ENCODE measurements at regions of chr7 and their contacts with region 1.

Region 1: DNA sequence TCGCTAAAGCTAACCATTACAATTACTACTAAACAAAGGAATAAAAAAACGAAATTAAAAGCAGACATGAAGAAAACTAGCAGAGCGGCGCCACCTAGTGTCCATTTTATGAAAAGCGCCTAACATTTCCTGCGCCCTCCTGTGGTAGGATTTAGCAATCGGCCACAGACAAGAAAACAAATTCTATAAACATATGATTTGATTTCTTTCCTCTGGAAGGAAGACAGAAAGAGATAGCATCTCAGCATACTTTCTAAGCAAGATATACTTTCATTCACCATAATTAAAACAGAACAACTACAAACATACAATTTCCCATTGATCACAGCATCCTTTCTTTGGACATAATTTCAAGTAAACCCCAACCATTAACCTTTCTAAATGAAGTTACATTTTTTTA is 337.7 kb upstream of the NPVF start:
- DNase-seq: peak; percentile 54
- H3K4me3 ChIP-seq: peak overlapping the region in 1 of 2 experiments; percentile 28; a peak in 1 of 4 replicates
- H3K27ac ChIP-seq: no peak overlapping the region
- H3K4me1 ChIP-seq: peaks cover 0 to 19% of the 10 kb centered on the region in 2 experiments; a peak in 2 of 4 replicates
- H3K27me3 ChIP-seq: no peaks in the 10 kb centered on the region
- CTCF ChIP-seq: peak; percentile 100
- EP300 ChIP-seq: no peak; a peak in 1 of 4 replicates
- RAD21 ChIP-seq: peak; percentile 100

Region 2: DNA sequence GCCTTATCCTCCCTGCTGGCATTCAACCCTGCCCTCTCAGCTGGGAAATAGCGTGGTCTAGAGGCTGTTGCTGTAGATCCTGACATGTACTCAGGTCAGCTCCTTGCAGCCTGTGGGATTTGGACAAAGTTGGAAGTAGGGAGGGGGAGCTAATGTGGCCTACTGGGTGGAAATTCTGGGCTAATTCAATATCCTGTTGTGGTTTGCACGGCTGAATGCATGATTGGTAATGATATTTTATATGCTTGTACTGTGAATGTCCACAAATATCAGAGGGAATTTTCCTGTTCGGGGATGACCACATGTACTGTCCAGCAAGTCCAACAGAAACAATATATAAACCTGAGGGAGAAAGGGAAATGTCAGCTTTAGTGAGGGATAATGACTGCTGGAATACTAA is 315.6 kb before region 1 on chr7:
- CTCF ChIA-PET with region 1: interaction called, 261 read pairs
- POLR2A ChIA-PET with region 1: no interaction called
- DNase-seq: no peak
- H3K4me3 ChIP-seq: no peak overlapping the region
- H3K27ac ChIP-seq: no peak overlapping the region
- H3K4me1 ChIP-seq: no peaks in the 10 kb centered on the region; a peak in 1 of 4 replicates
- H3K27me3 ChIP-seq: no peaks in the 10 kb centered on the region
- CTCF ChIP-seq: no peak
- EP300 ChIP-seq: no peak
- RAD21 ChIP-seq: no peak

Region 3: DNA sequence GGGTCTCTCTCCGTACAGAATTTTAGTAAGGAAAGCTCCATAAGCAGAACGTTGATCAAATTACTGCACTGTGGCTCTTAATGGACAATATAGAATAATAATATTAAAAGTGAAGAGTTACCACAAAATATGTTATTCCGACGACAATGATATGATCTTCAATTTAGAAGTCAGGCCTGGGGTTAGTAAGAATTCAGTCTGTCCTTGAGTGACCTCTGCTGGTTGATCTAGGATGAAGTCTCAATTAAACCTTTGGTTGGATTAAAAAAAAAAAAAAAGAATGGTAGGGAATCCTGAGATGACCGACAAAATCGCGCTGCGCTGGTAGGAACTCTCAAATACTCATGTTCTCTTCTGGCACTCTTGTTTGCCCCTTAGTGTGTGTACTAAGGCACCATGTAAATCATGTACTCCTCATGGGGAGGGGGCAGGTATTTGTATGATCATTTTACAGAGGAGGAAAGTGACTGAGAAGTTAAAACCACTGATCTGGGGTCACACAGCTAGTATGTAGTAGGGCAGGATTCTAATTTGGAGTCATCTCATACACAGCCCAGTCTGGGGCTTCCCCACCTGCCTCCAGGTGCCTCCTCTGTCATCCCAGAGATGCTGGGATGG is 176.4 kb before region 1 on chr7:
- CTCF ChIA-PET with region 1: interaction called, 766 read pairs
- POLR2A ChIA-PET with region 1: interaction called, 3 read pairs
- DNase-seq: peak; percentile 68
- H3K4me3 ChIP-seq: no peak overlapping the region
- H3K27ac ChIP-seq: no peak overlapping the region
- H3K4me1 ChIP-seq: peaks cover 0 to 20% of the 10 kb centered on the region in 2 experiments; a peak in 2 of 4 replicates
- H3K27me3 ChIP-seq: no peaks in the 10 kb centered on the region
- CTCF ChIP-seq: peak; percentile 73
- EP300 ChIP-seq: no peak
- RAD21 ChIP-seq: peak; percentile 88

Region 4: DNA sequence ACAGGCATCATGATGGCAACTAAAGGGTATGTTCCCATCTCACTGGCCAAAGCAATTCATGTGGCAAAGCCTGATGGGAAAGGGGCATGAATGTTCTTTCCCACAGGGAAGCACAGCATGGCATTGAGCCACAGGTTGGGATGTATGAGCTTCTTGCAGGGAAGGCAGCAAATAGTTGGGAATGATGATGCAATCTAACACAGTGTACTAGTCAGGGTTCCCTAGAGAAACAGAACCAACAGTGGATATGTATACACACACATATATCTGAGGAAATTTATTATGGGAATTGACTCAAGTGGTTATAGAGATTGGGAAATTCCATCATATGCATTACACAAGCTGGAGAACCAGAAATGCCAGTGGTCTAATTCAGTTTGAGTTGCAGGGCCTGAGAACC is 84.1 kb before region 1 on chr7:
- CTCF ChIA-PET with region 1: interaction called, 15 read pairs
- POLR2A ChIA-PET with region 1: no interaction called
- DNase-seq: no peak
- H3K4me3 ChIP-seq: no peak overlapping the region
- H3K27ac ChIP-seq: no peak overlapping the region
- H3K4me1 ChIP-seq: no peaks in the 10 kb centered on the region
- H3K27me3 ChIP-seq: no peaks in the 10 kb centered on the region
- CTCF ChIP-seq: no peak
- EP300 ChIP-seq: no peak
- RAD21 ChIP-seq: no peak

Region 5: GRCh38 chr7:25578991-25579777 is 13.2 kb after region 1 on chr7:
- CTCF ChIA-PET with region 1: interaction called, 37 read pairs
- POLR2A ChIA-PET with region 1: no interaction called
- DNase-seq: no peak
- H3K4me3 ChIP-seq: no peak overlapping the region
- H3K27ac ChIP-seq: no peak overlapping the region
- H3K4me1 ChIP-seq: peaks cover 0 to 8% of the 10 kb centered on the region in 2 experiments; a peak in 2 of 4 replicates
- H3K27me3 ChIP-seq: no peaks in the 10 kb centered on the region
- CTCF ChIP-seq: no peak
- EP300 ChIP-seq: no peak
- RAD21 ChIP-seq: no peak

Region 6: DNA sequence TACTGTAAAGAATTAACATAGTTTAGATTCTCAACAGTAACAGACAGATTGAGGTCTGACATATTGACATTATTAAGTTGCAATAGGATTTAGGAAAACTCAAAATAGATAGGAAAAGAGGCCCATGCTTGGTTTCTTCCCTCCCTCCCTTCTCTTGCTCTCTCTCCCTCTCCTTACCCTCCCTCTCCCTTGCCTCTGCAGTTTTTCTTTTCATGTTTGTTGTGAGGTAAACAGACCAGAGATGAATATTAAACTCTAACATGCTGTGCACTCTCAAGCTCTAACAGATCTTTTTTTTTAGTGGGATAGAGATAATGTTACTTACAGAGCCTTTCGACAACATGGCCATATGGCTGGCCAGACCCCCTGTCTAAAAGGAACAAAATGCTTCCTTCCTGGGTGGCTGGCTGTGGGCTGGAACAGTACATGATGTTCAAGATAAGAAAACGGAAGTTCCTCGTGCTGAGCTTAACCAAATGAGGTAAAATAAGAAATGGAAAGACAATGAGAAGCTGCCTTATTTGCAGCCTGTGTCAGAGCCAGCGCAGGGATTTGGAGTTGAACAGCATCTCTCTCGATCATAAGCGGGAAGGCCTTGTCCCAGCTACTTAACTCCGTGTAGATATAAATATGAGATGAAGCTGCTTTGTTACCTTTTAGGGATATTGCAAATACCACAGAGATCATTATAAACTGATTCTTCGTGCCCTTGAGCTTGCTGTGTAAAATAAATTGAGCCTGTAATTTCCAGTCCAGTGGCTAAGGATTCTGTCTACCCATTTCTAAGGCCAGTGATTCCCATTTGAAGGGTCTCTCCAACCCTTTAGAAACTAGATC is 54.2 kb after region 1 on chr7:
- CTCF ChIA-PET with region 1: interaction called, 14 read pairs
- POLR2A ChIA-PET with region 1: no interaction called
- DNase-seq: peak; percentile 71
- H3K4me3 ChIP-seq: no peak overlapping the region
- H3K27ac ChIP-seq: peak overlapping the region in 1 of 2 experiments; percentile 91; a peak in 2 of 4 replicates
- H3K4me1 ChIP-seq: peaks cover 0 to 19% of the 10 kb centered on the region in 2 experiments; a peak in 3 of 4 replicates
- H3K27me3 ChIP-seq: no peaks in the 10 kb centered on the region
- CTCF ChIP-seq: no peak
- EP300 ChIP-seq: peak in 1 of 2 experiments; percentile 88; a peak in 1 of 4 replicates
- RAD21 ChIP-seq: peak; percentile 36; the same call in 1 of the 2 replicates

Region 7: GRCh38 chr7:25844102-25844870 is 278.3 kb after region 1 on chr7:
- CTCF ChIA-PET with region 1: interaction called, 432 read pairs
- POLR2A ChIA-PET with region 1: no interaction called
- DNase-seq: no peak
- H3K4me3 ChIP-seq: no peak overlapping the region
- H3K27ac ChIP-seq: no peak overlapping the region
- H3K4me1 ChIP-seq: peaks cover 0 to 18% of the 10 kb centered on the region in 2 experiments; a peak in 2 of 4 replicates
- H3K27me3 ChIP-seq: no peaks in the 10 kb centered on the region; the same call in 1 of the 2 replicates
- CTCF ChIP-seq: no peak
- EP300 ChIP-seq: no peak
- RAD21 ChIP-seq: no peak